K562 (cell line): ENCODE measurements at regions of chr19 and their contacts with region 1.

Region 1: DNA sequence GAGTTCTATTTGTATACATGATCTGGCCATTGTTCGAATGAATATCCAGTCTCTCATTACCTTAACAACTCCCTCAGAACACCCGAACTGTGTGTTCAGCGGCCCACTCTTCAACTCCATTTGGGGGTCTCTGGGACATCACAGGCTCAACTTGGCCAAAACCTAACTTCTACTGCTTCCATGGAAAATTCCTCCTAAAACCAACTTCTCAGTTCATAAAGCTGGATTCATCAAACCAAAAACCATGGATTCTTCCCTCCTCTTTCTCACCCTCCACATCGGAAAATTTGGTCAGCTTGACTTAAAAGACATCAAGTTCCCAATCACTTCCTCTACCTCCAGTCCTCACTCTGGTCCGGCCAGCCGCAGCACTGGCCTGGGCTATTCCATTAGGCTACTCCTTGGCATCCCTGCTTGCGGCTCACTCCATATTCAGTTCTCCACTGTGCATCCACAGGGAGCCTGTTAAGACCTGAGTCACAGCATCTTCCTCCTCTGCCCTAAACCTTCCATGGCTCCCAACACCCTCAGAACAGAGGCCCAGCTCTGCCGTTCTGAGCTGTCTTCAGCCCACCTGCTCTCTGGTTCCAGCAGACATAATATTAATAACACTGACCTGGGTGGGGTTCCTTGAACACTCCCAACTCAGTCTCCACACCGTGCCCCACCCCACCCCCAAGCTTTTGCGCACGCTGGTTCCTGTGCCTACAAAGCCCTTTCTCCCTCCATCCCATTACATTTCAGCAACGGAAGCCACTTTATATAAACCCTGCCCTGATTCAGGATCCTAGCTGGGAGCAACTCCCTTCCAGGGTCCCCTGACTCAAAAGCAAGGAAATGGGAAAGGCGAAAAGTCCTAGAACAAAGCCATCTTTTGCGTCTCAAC is 1.1 kb downstream of the ZNF792 start:
- DNase-seq: peak; percentile 26 to 42 (median 37)
- ATAC-seq: peak; percentile 46
- H3K4me3 ChIP-seq: peak overlapping the region; percentile 81
- H3K27ac ChIP-seq: peak overlapping the region; percentile 87
- H3K4me1 ChIP-seq: peaks cover 12 to 28% of the 10 kb centered on the region in 2 experiments; a peak in 4 of 5 replicates
- H3K27me3 ChIP-seq: no peaks in the 10 kb centered on the region
- CTCF ChIP-seq: no peak; a peak in 1 of 6 replicates
- EP300 ChIP-seq: no peak
- POLR2A ChIP-seq: peak; percentile 61; the same call in 1 of the 2 replicates
- RAD21 ChIP-seq: no peak

Region 2: DNA sequence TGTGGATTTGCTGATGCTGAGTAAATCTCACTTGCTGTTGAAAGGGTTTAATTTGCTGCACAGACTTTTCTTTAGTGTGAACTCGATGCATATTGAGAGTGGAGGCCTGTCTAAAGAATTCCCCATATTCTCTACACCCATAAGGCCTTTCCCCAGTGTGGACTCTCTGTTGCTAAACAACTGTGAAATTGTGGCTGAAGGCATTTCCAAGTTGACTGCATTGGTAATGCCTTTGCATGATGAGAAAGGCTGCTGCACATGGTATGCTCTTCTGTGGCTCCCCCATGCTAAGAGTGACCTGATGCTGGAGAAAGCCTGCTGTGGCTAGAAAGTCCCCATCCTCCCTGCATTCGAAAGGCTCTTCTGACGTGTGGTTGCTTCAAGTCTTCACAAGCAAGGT is 183.3 kb before region 1 on chr19:
- CTCF ChIA-PET with region 1: no interaction called
- POLR2A ChIA-PET with region 1: no interaction called
- in situ Hi-C with region 1: no loop called
- intact Hi-C with region 1: no loop called
- DNase-seq: no peak
- ATAC-seq: no peak
- H3K4me3 ChIP-seq: no peak overlapping the region
- H3K27ac ChIP-seq: no peak overlapping the region
- H3K4me1 ChIP-seq: no peaks in the 10 kb centered on the region
- H3K27me3 ChIP-seq: no peaks in the 10 kb centered on the region
- CTCF ChIP-seq: no peak
- EP300 ChIP-seq: no peak
- POLR2A ChIP-seq: no peak
- RAD21 ChIP-seq: no peak

Region 3: GRCh38 chr19:34926685-34927375 is 36.1 kb before region 1 on chr19 and contains the start of gene ZNF30:
- CTCF ChIA-PET with region 1: no interaction called
- POLR2A ChIA-PET with region 1: no interaction called
- in situ Hi-C with region 1: no loop called
- intact Hi-C with region 1: loop called (anchors 1 kb)
- DNase-seq: peak; percentile 82 to 95 (median 90)
- ATAC-seq: peak; percentile 100
- H3K4me3 ChIP-seq: peak within 1 kb of the TSS; percentile 64
- H3K27ac ChIP-seq: peak within 1 kb of the TSS; percentile 40
- H3K4me1 ChIP-seq: peaks cover 4 to 23% of the 10 kb centered on the region in 2 experiments; a peak in 4 of 5 replicates
- H3K27me3 ChIP-seq: no peaks in the 10 kb centered on the region
- CTCF ChIP-seq: no peak
- EP300 ChIP-seq: no peak
- POLR2A ChIP-seq: peak; percentile 73
- RAD21 ChIP-seq: no peak
- polyA plus RNA-seq, gene ZNF30: 9.2 to 13.4 TPM